ENCODE measurements at regions of chr16 and their contacts with region 1.

Region 1: GRCh38 chr16:24504472-24505345 is 34.7 kb upstream of the RBBP6 start:
- DNase-seq: peak; percentile 70
- H3K4me3 Mint-ChIP-seq: no peak overlapping the region
- H3K27ac Mint-ChIP-seq: no peak overlapping the region
- H3K4me1 Mint-ChIP-seq: no peaks in the 10 kb centered on the region
- H3K27me3 Mint-ChIP-seq: no peaks in the 10 kb centered on the region

Region 2: DNA sequence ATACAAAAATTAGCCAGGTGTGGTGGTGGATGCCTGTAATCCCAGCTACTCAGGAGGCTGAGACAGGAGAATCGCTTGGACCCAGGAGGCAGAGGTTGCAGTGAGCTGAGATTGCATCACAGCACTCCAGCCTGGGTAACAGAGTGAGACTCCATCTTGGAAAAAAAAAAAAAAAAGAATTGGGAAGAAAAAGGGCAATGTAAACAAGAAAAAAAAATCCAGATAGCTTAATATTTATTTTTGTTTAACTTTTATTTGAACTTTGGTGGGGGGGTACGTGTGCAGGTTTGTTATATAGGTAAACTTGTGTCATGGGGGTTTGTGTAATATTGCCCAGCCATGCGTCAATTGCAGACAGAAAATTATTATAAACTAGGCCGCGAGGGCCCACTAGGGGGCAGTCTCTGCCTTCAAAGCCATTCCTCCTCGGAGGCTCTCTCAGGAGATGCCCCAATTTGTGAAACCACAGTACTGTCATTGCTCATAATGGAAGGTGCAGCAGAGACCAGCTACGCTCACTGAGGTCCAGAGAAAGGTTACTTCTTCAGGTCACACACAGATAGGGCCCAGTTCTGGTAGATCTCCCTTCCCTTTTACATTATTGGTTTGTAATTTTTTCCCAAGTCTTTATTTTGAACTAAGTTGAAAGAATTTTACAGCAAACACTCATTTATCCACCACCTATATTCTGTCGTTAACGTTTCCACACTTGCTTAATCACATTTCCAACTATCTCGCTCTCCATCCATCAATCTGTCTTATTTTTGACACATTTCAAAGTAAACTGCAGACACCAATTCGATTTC is 462.7 kb before region 1 on chr16:
- CTCF ChIA-PET with region 1: interaction called, 29 read pairs
- intact Hi-C with region 1: loop called (anchors 1 kb)
- DNase-seq: peak; percentile 88
- H3K4me3 Mint-ChIP-seq: no peak overlapping the region
- H3K27ac Mint-ChIP-seq: no peak overlapping the region
- H3K4me1 Mint-ChIP-seq: peaks cover 4% of the 10 kb centered on the region
- H3K27me3 Mint-ChIP-seq: no peaks in the 10 kb centered on the region

Region 3: DNA sequence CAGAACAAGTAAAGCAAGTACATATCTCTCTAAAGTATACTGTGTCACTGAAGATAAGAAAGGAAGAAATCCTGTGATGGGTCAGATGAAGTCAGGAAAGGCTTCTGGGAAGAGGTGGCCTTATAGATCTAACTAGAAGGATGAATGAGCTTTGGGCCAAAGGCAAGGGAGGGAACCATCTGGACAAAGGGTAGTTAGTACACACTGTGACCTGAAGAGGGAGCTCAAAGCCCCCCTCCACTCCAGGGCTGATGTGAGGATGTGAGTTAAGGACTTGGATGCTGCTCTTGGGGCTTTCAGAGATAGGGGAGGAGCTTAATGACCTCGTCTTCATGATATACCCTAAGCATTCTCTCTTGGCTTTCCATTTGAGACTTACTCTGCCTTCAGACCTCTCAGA is 433.9 kb before region 1 on chr16:
- CTCF ChIA-PET with region 1: interaction called, 17 read pairs
- intact Hi-C with region 1: loop called (anchors 10 kb)
- DNase-seq: peak; percentile 61
- H3K4me3 Mint-ChIP-seq: no peak overlapping the region
- H3K27ac Mint-ChIP-seq: no peak overlapping the region
- H3K4me1 Mint-ChIP-seq: peaks cover 8% of the 10 kb centered on the region
- H3K27me3 Mint-ChIP-seq: no peaks in the 10 kb centered on the region

Region 4: GRCh38 chr16:24409049-24409448 is 95.7 kb before region 1 on chr16:
- CTCF ChIA-PET with region 1: interaction called, 7 read pairs
- intact Hi-C with region 1: loop called (anchors 10 kb)
- DNase-seq: no peak
- H3K4me3 Mint-ChIP-seq: no peak overlapping the region
- H3K27ac Mint-ChIP-seq: no peak overlapping the region
- H3K4me1 Mint-ChIP-seq: no peaks in the 10 kb centered on the region
- H3K27me3 Mint-ChIP-seq: peaks cover 8% of the 10 kb centered on the region

Region 5: GRCh38 chr16:24516900-24517669 is 12.4 kb after region 1 on chr16:
- CTCF ChIA-PET with region 1: interaction called, 20 read pairs
- intact Hi-C with region 1: no loop called
- DNase-seq: peak; percentile 91
- H3K4me3 Mint-ChIP-seq: peak overlapping the region; percentile 46
- H3K27ac Mint-ChIP-seq: peak overlapping the region; percentile 36
- H3K4me1 Mint-ChIP-seq: peaks cover 4% of the 10 kb centered on the region
- H3K27me3 Mint-ChIP-seq: no peaks in the 10 kb centered on the region

Measured in activated naive CD4-positive, alpha-beta T cell treated with anti-CD3 and anti-CD28 coated beads for 36 hours (primary cell).